ENCODE measurements at regions of chr3 and their contacts with region 1.

Region 1: GRCh38 chr3:184711493-184712247 is at the start of gene MAGEF1:
- DNase-seq: peak; percentile 65 to 80 (median 71)
- H3K4me3 ChIP-seq: peak within 1 kb of the TSS; percentile 43 to 69
- H3K4me3 Mint-ChIP-seq: peak within 1 kb of the TSS; percentile 86 to 97 (median 94)
- H3K27ac ChIP-seq: peak within 1 kb of the TSS; percentile 63
- H3K27ac Mint-ChIP-seq: peak within 1 kb of the TSS; percentile 69 to 97 (median 95)
- H3K4me1 ChIP-seq: peaks cover 21% of the 10 kb centered on the region
- H3K4me1 Mint-ChIP-seq: peaks cover 26 to 33% (median 30%) of the 10 kb centered on the region in 4 donors
- H3K27me3 ChIP-seq: no peaks in the 10 kb centered on the region
- H3K27me3 Mint-ChIP-seq: no peaks in the 10 kb centered on the region
- total RNA-seq, gene MAGEF1: 16.4 to 16.5 TPM

Region 2: DNA sequence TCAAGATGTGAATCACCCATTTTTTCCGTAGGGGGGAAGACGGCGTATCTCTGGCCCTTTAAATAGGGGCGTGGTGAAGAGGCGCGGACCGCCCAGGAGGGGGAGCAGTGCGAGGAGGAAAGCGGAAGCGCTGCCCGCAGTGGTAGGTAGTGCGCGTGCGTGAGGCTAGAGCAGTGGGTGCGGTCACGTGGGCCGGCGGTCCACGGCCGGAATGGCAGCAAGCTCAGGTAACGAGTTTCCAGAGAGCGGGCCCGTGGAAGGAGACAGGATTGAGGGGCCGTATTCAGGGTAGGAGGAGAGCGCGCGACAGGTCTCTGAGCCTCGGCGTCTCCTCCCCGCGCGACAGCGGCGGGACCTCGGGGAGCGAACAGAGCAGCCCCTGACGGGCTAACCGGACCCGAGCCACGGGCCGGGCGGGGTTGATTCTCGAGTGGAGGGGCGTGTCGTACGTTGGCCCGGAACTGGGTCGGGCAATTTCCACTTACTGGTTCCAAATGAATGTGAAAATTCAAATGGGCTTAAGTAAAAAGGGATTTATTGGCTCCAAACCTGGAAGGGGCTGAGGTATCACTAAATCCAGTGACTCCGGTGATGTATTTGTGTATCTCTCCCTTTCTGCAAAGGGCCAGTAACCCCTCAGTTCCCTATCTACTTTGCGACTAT is 100.5 kb after region 1 on chr3 and contains the start of gene VPS8:
- CTCF ChIA-PET with region 1: no interaction called
- POLR2A ChIA-PET with region 1: interaction called, 6 read pairs
- intact Hi-C with region 1: loop called (anchors 5 kb)
- DNase-seq: peak; percentile 96 to 97 (median 96)
- H3K4me3 ChIP-seq: peak within 1 kb of the TSS; percentile 83 to 88
- H3K4me3 Mint-ChIP-seq: peak within 1 kb of the TSS; percentile 96 to 99 (median 98)
- H3K27ac ChIP-seq: peak within 1 kb of the TSS; percentile 79
- H3K27ac Mint-ChIP-seq: peak within 1 kb of the TSS; percentile 93 to 99 (median 97)
- H3K4me1 ChIP-seq: peaks cover 46% of the 10 kb centered on the region
- H3K4me1 Mint-ChIP-seq: peaks cover 31 to 54% (median 44%) of the 10 kb centered on the region in 4 donors
- H3K27me3 ChIP-seq: no peaks in the 10 kb centered on the region
- H3K27me3 Mint-ChIP-seq: peaks cover 4 to 5% of the 10 kb centered on the region in 2 donors
- total RNA-seq, gene VPS8: 83.9 to 85.9 TPM

Measured in CD4-positive, alpha-beta memory T cell (primary cell).